Esophagus muscularis mucosa (tissue), 4 donors: ENCODE measurements at regions of chr4 and their contacts with region 1.

Region 1: GRCh38 chr4:10157478-10158332 is 41.1 kb upstream of the WDR1 start:
- DNase-seq: no peak
- H3K4me3 ChIP-seq: peak overlapping the region in 1 of 4 donors; percentile 14
- H3K27ac ChIP-seq: peak overlapping the region; percentile 73 to 76 (median 74)
- H3K4me1 ChIP-seq: peaks cover 0 to 33% (median 20%) of the 10 kb centered on the region in 4 donors
- H3K27me3 ChIP-seq: no peaks in the 10 kb centered on the region
- CTCF ChIP-seq: peak; percentile 82 to 85 (median 84)
- EP300 ChIP-seq: no peak
- POLR2A ChIP-seq: no peak

Region 2: GRCh38 chr4:10123227-10124101 is 34.2 kb before region 1 on chr4:
- intact Hi-C with region 1: loop called (anchors 5 kb)
- DNase-seq: no peak
- H3K4me3 ChIP-seq: no peak overlapping the region
- H3K27ac ChIP-seq: peak overlapping the region in 3 of 4 donors; percentile 4 to 28 (median 17)
- H3K4me1 ChIP-seq: peaks cover 7 to 31% (median 28%) of the 10 kb centered on the region in 4 donors
- H3K27me3 ChIP-seq: no peaks in the 10 kb centered on the region
- CTCF ChIP-seq: no peak
- EP300 ChIP-seq: no peak
- POLR2A ChIP-seq: no peak

Region 3: DNA sequence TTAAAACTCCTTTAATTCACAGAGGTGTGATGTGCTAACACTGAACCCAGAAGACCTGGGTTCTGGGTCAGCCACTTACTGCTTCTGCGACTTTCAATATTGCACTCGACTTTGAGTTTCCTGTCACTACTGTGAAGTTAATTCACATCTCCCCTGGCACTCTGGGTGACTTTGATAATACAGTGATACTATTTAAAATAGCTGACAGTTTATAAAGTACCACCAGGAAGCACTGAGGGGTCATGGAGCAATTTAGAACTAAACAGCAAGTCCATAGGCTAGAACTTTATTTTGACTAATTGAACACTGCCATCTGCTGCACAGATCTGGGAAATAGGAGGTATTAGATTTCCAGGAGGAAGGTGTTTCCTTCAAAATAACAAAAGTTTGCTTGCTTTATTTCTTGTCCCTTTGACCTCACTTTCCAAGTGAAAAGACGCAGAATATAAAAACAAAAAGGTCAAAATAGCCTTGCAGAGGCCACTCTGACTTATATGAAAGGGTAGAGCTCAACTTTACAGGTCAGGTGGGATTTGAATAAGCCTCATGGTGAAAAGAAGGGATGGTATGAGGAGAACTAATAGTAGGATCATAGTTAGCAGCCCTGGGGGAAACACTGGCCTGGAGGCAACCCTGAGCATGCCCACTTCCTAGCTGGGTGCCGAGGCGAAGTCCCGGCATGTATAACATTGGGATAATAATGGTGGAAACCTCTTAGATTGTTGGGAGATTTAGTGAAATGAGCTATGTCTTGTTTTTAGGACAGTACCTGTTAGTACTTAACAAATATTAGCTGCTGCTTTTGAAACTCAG is 246.1 kb after region 1 on chr4:
- intact Hi-C with region 1: loop called (anchors 1 kb)
- DNase-seq: no peak
- H3K4me3 ChIP-seq: no peak overlapping the region
- H3K27ac ChIP-seq: no peak overlapping the region
- H3K4me1 ChIP-seq: peaks cover 0 to 4% (median 2%) of the 10 kb centered on the region in 4 donors
- H3K27me3 ChIP-seq: no peaks in the 10 kb centered on the region
- CTCF ChIP-seq: peak; percentile 59 to 73 (median 61)
- EP300 ChIP-seq: no peak
- POLR2A ChIP-seq: no peak

Region 4: GRCh38 chr4:10554694-10555093 is 397.0 kb after region 1 on chr4:
- intact Hi-C with region 1: loop called (anchors 5 kb)
- DNase-seq: no peak
- H3K4me3 ChIP-seq: no peak overlapping the region
- H3K27ac ChIP-seq: no peak overlapping the region
- H3K4me1 ChIP-seq: peaks cover 0 to 9% (median 3%) of the 10 kb centered on the region in 4 donors
- H3K27me3 ChIP-seq: peaks cover 0 to 6% (median 0%) of the 10 kb centered on the region in 4 donors
- CTCF ChIP-seq: peak; percentile 67 to 78 (median 71)
- EP300 ChIP-seq: no peak
- POLR2A ChIP-seq: no peak